Naive thymus-derived CD4-positive, alpha-beta T cell (primary cell): ENCODE measurements at regions of chr11 and their contacts with region 1.

Region 1: DNA sequence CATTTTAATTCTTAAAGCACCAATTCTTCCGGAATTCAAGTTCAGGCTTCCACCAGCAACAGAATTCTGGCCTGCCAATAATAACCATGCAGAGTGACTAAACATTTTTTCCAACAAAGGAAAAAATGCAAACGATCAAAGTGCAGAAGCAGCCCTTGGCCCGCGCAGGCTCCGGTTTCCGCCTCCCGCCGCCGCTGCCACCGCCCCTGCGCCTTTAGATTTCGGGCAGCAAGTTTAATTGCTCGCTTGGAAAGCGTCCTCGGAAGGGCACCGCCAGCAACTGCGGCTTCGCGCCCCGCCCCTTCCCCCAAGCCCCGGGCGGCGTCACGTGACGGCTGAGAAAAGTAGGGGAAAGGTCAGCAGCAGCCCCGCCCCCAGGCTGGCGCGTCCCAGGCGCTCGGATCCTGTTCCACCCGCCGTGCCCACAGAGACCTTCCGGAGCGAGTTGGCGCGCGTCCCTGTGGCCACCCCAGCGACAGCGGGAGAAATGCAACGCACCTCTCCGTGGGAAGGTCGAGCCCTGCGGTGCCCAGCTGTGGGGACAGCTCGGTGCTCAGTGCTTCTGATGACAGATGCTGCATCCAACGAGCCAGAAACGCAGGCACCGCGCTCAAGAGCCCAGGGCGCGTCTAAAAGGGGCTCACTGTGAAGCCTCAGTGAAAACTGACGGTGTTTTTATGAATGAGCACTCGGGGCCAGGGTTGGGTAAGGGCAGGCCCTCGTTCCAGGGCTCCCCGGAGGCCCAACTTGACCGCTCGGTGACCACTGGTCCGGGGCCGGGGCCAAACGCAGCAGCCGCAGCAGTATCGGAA is 2.5 kb downstream of the CPT1A start:
- DNase-seq: peak; percentile 87 to 94 (median 92)
- ATAC-seq: peak; percentile 88
- H3K4me3 ChIP-seq: peak overlapping the region; percentile 81
- H3K4me3 Mint-ChIP-seq: peak overlapping the region; percentile 85 to 93 (median 90)
- H3K27ac ChIP-seq: peak overlapping the region; percentile 73
- H3K27ac Mint-ChIP-seq: peak overlapping the region; percentile 81 to 95 (median 93)
- H3K4me1 ChIP-seq: peaks cover 49% of the 10 kb centered on the region in 2 donors
- H3K4me1 Mint-ChIP-seq: peaks cover 31 to 70% (median 52%) of the 10 kb centered on the region in 7 donors
- H3K27me3 ChIP-seq: no peaks in the 10 kb centered on the region
- H3K27me3 Mint-ChIP-seq: peaks cover 0 to 2% (median 0%) of the 10 kb centered on the region in 5 donors

Region 2: GRCh38 chr11:68584097-68584496 is 255.2 kb before region 1 on chr11:
- CTCF ChIA-PET with region 1: no interaction called
- POLR2A ChIA-PET with region 1: no interaction called
- intact Hi-C with region 1: loop called in 1 of 2 experiments (anchors 1 kb)
- DNase-seq: peak; percentile 13 to 52 (median 45)
- ATAC-seq: peak; percentile 83
- H3K4me3 ChIP-seq: no peak overlapping the region
- H3K4me3 Mint-ChIP-seq: no peak overlapping the region
- H3K27ac ChIP-seq: no peak overlapping the region
- H3K27ac Mint-ChIP-seq: peak overlapping the region in 3 of 9 donors; percentile 18 to 63 (median 55)
- H3K4me1 ChIP-seq: no peaks in the 10 kb centered on the region
- H3K4me1 Mint-ChIP-seq: peaks cover 0 to 26% (median 4%) of the 10 kb centered on the region in 7 donors
- H3K27me3 ChIP-seq: no peaks in the 10 kb centered on the region
- H3K27me3 Mint-ChIP-seq: no peaks in the 10 kb centered on the region

Region 3: DNA sequence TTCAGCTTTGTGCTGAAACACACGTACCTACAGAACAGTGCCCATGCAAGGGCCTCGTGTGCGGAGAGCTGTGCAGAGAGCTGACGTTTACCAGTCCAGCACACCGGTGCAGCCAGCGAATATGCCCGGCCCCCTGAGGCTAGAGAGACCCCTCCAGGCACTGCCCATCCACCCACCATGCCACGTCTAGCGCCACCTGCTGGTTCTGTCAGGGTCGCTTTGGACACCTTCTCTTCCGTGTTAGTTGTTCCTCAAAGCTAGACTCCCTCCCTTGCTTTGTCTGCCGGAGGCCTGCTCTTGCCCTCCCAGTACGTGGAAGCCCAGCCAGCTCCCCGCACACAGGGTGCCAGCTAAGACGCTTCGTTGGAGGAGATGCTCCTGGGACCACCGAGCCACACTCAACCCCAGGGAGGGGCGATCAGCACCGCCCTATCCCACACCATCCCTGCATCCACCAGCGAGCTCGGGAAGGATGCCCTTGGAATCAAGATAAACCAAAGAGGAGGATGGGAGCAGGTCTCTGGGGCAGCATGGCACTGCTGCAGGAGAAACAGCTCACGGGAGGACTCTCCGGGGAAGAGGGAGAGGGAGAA is 40.9 kb before region 1 on chr11:
- CTCF ChIA-PET with region 1: interaction called, 7 read pairs
- POLR2A ChIA-PET with region 1: interaction called, 4 read pairs
- intact Hi-C with region 1: loop called in 1 of 2 experiments (anchors 2 kb)
- DNase-seq: peak in 8 of 9 donors; percentile 17 to 42 (median 26)
- ATAC-seq: no peak
- H3K4me3 ChIP-seq: no peak overlapping the region
- H3K4me3 Mint-ChIP-seq: no peak overlapping the region
- H3K27ac ChIP-seq: no peak overlapping the region
- H3K27ac Mint-ChIP-seq: no peak overlapping the region
- H3K4me1 ChIP-seq: no peaks in the 10 kb centered on the region
- H3K4me1 Mint-ChIP-seq: peaks cover 0 to 8% (median 0%) of the 10 kb centered on the region in 7 donors
- H3K27me3 ChIP-seq: no peaks in the 10 kb centered on the region
- H3K27me3 Mint-ChIP-seq: no peaks in the 10 kb centered on the region

Region 4: DNA sequence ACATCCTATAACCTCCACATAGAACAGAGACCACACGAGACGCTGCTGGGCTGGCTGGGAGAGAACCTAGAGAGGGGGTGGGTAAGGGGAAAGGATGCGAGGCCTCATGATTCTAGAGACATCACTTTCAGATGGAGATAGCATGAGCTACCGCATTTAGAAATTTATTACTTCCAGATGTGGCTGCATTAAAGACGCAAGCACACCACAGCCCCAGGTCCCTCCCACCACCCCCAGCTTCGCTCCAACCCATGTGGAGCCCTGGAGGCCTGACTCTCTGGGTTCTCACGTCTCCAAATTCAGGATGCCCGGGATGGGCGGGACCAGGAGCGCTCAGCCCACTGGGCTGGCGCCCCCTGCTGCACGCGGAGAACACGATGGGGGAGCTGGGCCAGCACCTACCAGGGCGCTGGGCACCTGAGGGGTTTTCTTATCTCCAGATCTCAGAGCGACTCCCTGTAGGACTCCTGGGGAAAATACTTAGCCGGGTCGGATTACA is 50.7 kb after region 1 on chr11:
- CTCF ChIA-PET with region 1: no interaction called
- POLR2A ChIA-PET with region 1: no interaction called
- intact Hi-C with region 1: no loop called
- DNase-seq: peak in 1 of 9 donors; percentile 7
- ATAC-seq: no peak
- H3K4me3 ChIP-seq: no peak overlapping the region
- H3K4me3 Mint-ChIP-seq: peak overlapping the region in 1 of 10 donors; percentile 5
- H3K27ac ChIP-seq: no peak overlapping the region
- H3K27ac Mint-ChIP-seq: no peak overlapping the region
- H3K4me1 ChIP-seq: no peaks in the 10 kb centered on the region
- H3K4me1 Mint-ChIP-seq: no peaks in the 10 kb centered on the region
- H3K27me3 ChIP-seq: no peaks in the 10 kb centered on the region
- H3K27me3 Mint-ChIP-seq: no peaks in the 10 kb centered on the region

Region 5: GRCh38 chr11:68903288-68904247 is 64.3 kb after region 1 on chr11 and contains the starts of genes IGHMBP2 and MRPL21:
- CTCF ChIA-PET with region 1: no interaction called
- POLR2A ChIA-PET with region 1: interaction called, 4 read pairs
- intact Hi-C with region 1: loop called (anchors 1 kb)
- DNase-seq: peak; percentile 70 to 90 (median 83)
- ATAC-seq: peak; percentile 99
- H3K4me3 ChIP-seq: peak within 1 kb of the TSS; percentile 91
- H3K4me3 Mint-ChIP-seq: peak within 1 kb of the TSS; percentile 90 to 98 (median 96)
- H3K27ac ChIP-seq: peak within 1 kb of the TSS; percentile 90
- H3K27ac Mint-ChIP-seq: peak within 1 kb of the TSS; percentile 89 to 95 (median 93)
- H3K4me1 ChIP-seq: peaks cover 21% of the 10 kb centered on the region in 2 donors
- H3K4me1 Mint-ChIP-seq: peaks cover 35 to 62% (median 48%) of the 10 kb centered on the region in 7 donors
- H3K27me3 ChIP-seq: no peaks in the 10 kb centered on the region
- H3K27me3 Mint-ChIP-seq: no peaks in the 10 kb centered on the region
- total RNA-seq, gene IGHMBP2: 27.5 to 41.4 (median 32.2) TPM
- total RNA-seq, gene MRPL21: 29.6 to 71.1 (median 37.9) TPM

Region 6: DNA sequence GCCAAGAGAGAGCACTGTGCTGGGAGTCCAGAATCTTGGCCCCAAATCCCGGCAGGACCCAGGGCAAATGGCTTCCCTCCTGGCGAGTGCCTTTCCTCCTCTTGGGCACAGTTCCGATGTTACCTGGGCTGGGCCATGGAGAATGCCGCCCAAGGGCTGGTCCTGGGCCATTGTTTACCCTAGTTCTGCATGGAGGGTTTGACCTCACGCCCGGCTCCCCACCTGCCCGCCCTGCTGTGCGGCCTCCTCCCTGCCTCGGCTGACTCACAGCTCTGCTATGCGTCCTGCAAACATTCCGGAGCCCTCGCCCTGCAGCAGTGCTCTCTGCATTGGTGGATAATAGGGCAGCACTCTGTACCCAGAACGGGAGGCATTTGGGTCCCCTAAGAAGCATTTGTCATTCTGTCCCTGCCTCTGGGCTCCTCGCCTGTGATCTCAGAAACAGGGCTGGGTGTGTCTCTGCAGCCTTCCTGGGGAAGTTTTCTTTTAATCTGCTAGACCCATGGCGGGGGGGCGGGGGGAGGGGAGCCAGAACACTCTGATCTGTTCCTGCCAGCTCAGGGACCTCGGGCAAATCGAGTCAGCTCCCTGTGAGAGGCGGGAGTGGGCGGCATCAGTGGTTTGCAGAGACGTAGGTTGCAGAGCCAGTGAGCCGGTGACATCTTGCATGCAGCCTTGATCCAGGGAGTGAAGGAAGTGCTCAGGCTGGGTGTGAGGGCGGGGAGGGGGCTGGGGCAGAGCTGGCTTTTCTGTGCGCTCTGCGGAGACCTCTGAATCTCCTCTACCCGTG is 283.6 kb after region 1 on chr11:
- CTCF ChIA-PET with region 1: no interaction called
- POLR2A ChIA-PET with region 1: no interaction called
- intact Hi-C with region 1: loop called in 1 of 2 experiments (anchors 1 kb)
- DNase-seq: peak in 8 of 9 donors; percentile 51 to 78 (median 60)
- ATAC-seq: peak; percentile 85
- H3K4me3 ChIP-seq: peak overlapping the region; percentile 53
- H3K4me3 Mint-ChIP-seq: peak overlapping the region; percentile 69 to 86 (median 81)
- H3K27ac ChIP-seq: peak overlapping the region; percentile 76
- H3K27ac Mint-ChIP-seq: peak overlapping the region; percentile 80 to 94 (median 88)
- H3K4me1 ChIP-seq: peaks cover 4 to 42% of the 10 kb centered on the region in 2 donors
- H3K4me1 Mint-ChIP-seq: peaks cover 24 to 57% (median 40%) of the 10 kb centered on the region in 7 donors
- H3K27me3 ChIP-seq: no peaks in the 10 kb centered on the region
- H3K27me3 Mint-ChIP-seq: no peaks in the 10 kb centered on the region

Region 7: DNA sequence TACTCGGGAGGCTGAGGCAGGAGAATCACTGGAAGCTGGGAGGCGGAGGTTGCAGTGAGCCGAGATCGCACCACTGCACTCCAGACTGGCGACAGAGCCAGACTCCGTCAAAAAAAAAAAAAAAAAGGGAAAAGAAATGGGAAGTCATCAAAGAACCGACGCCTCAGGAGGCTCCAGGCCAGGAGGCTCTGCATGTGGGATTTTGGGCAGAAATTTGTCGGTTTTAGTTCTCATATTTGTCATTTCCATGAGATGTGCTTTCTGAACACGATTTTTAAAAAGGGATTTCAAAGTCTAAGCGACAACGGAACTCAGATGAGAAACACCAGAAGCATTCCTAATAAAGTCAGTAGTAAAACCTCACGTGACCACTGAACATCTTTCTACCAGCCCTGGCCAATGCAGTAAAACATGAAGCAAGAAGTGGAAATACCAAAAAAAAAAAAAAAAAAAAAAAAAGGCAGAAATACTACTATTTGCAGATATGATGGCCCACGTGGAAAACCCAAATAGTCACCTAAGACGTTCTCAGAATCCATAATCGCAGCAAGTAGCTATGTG is 836.6 kb after region 1 on chr11:
- CTCF ChIA-PET with region 1: no interaction called
- POLR2A ChIA-PET with region 1: no interaction called
- intact Hi-C with region 1: loop called in 1 of 2 experiments (anchors 1 kb)
- DNase-seq: no peak
- ATAC-seq: no peak
- H3K4me3 ChIP-seq: peak overlapping the region; percentile 75
- H3K4me3 Mint-ChIP-seq: peak overlapping the region; percentile 91 to 97 (median 94)
- H3K27ac ChIP-seq: peak overlapping the region; percentile 85
- H3K27ac Mint-ChIP-seq: peak overlapping the region in 3 of 9 donors; percentile 90 to 95 (median 92)
- H3K4me1 ChIP-seq: peaks cover 15 to 19% of the 10 kb centered on the region in 2 donors
- H3K4me1 Mint-ChIP-seq: peaks cover 16 to 37% (median 25%) of the 10 kb centered on the region in 7 donors
- H3K27me3 ChIP-seq: no peaks in the 10 kb centered on the region
- H3K27me3 Mint-ChIP-seq: peaks cover 0 to 13% (median 0%) of the 10 kb centered on the region in 5 donors